BJ (cell line): ENCODE measurements at regions of chr3 and their contacts with region 1.

Region 1: GRCh38 chr3:126134219-126134975 is 46.0 kb downstream of the ALDH1L1 start:
- DNase-seq: no peak
- H3K4me3 ChIP-seq: no peak overlapping the region
- H3K27me3 ChIP-seq: peaks cover 9% of the 10 kb centered on the region
- CTCF ChIP-seq: peak; percentile 80

Region 2: DNA sequence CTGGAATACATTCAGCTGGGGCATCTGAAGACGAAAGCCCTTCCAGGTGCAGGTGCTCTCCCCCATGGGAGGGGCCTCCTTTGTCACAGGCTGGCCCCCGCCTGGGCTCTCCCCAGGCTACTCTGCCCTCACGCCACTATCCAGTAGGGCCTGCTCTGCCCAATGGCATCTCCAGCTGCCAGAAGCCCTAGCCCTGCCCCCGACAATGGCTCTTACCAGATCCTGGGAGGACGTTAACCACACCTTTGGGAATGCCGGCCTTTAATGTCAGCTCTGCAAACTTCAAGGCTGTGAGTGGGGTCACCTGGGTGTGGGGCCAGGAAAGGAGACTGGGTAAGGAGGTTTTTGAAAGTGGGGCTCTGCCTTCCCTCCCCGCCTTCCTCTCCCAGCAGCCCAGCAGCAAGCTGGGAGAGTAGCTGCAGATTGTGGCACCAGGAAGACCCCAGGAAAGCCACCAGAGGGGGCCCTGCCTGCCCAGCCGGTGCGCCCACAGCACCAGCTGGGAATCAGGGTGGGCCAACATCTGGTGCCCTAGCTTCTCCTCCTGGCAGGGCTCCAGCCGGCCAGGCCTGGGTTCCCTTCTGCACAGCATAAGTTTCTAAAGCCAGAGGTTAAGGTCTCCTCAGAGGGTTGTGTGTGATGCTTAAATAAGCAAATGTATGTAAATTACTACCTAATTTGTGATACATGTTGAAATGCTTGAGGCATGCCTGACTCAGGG is 10.1 kb before region 1 on chr3:
- CTCF ChIA-PET with region 1: interaction called, 18 read pairs
- POLR2A ChIA-PET with region 1: no interaction called
- DNase-seq: no peak
- H3K4me3 ChIP-seq: no peak overlapping the region
- H3K27me3 ChIP-seq: peaks cover 9% of the 10 kb centered on the region
- CTCF ChIP-seq: no peak

Region 3: DNA sequence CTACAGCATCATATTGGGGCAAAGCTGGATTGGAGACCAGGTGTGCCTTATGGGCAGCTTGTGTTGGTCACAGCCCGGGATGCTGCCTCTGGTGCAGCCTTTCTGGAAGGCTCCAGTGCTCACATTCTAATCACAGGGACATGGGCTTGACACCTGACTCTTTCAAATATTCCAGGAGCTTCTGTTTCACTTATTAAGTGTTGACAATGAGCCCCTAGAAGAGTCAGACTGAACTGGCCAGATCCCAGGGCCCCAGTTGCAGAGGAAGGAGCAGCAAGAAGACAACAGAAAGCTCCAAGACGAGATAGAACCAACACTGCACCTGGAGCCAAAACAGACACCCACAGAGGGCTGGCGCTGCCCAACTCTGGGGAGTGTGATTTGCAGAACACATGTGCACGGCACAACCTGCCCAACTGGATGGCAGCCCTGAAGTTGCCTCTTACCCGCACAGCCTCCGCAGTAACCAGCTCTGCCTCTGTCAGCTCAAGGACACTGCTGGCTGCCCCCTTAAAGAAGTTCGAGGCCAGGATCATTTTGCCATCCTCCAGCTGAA is 15.6 kb after region 1 on chr3:
- CTCF ChIA-PET with region 1: interaction called, 14 read pairs
- POLR2A ChIA-PET with region 1: no interaction called
- DNase-seq: no peak
- H3K4me3 ChIP-seq: no peak overlapping the region
- H3K27me3 ChIP-seq: peaks cover 7% of the 10 kb centered on the region
- CTCF ChIP-seq: no peak

Region 4: GRCh38 chr3:126197854-126198584 is 63.6 kb after region 1 on chr3:
- CTCF ChIA-PET with region 1: interaction called, 20 read pairs
- POLR2A ChIA-PET with region 1: no interaction called
- DNase-seq: no peak
- H3K4me3 ChIP-seq: no peak overlapping the region
- H3K27me3 ChIP-seq: no peaks in the 10 kb centered on the region
- CTCF ChIP-seq: peak; percentile 91

Region 5: GRCh38 chr3:126259411-126260391 is 125.3 kb after region 1 on chr3:
- CTCF ChIA-PET with region 1: no interaction called
- POLR2A ChIA-PET with region 1: no interaction called
- DNase-seq: no peak
- H3K4me3 ChIP-seq: no peak overlapping the region
- H3K27me3 ChIP-seq: no peaks in the 10 kb centered on the region
- CTCF ChIP-seq: peak; percentile 66

Region 6: GRCh38 chr3:126394575-126395228 is 260.3 kb after region 1 on chr3 and contains the start of gene CFAP100:
- CTCF ChIA-PET with region 1: interaction called, 53 read pairs
- POLR2A ChIA-PET with region 1: no interaction called
- DNase-seq: no peak
- H3K4me3 ChIP-seq: peak within 1 kb of the TSS; percentile 14; the same call in 1 of the 2 replicates
- H3K27me3 ChIP-seq: peaks cover 18% of the 10 kb centered on the region
- CTCF ChIP-seq: no peak
- polyA plus RNA-seq, gene CFAP100: not detected in 2 replicates

Region 7: DNA sequence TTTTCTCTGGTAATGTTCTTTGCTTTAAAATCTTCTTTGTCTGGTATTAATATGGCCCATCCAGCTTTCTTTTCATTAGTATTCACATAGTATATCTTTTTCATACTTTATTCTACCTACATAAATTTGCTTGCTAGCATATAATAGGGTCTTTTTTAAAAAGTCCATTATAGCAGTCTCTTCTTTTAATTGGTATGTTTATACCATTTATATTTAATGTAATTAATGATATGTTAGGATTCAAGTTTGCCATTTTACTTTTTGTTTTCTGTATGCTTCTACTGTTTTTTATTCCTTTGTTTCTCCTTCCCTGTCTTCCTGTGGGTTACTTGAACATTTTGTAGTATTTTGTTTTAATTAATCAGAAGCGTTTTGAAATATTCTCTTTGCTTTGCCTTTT is 658.6 kb after region 1 on chr3:
- CTCF ChIA-PET with region 1: no interaction called
- POLR2A ChIA-PET with region 1: no interaction called
- DNase-seq: no peak
- H3K4me3 ChIP-seq: no peak overlapping the region
- H3K27me3 ChIP-seq: no peaks in the 10 kb centered on the region
- CTCF ChIP-seq: no peak